Activated T-helper 2 cell treated with anti-CD3 and anti-CD28 coated beads, Interferon-gamma antibody, Interleukin-2, Interleukin-4, amounts not matched to agents 10 μg/mL and 5 μg/mL and 100 μg/mL, durations not matched to agents 14 hours and 24 hours and 36 hours (primary cell): ENCODE measurements at regions of chr6 and their contacts with region 1.

Region 1: DNA sequence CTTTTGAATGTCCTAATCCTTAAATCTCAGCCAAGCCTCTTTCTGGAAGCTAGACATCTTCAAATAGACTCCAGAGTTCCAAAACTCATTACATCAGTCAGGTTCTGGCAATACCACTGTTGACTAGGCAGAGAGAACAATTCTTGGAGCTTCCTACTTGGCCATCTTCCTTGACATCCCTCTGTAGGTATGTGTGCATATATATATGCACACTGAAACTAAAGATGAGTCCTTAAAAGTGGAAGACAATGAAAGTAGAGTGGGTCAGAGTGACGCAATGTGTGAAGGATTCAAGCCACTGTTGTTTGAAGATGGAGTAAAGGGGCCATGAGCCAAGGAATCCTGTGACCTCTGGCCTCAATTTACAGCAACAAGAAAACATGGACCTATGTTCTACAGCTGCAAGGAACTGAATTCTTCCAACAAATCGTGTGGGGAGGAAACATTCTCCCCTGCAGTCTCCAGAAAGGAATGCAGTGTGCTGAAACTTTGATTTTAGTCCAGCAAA is 18.7 kb upstream of the DUSP22 start:
- DNase-seq: no peak
- H3K4me3 Mint-ChIP-seq: no peak overlapping the region
- H3K27ac Mint-ChIP-seq: no peak overlapping the region
- H3K4me1 Mint-ChIP-seq: peaks cover 21% of the 10 kb centered on the region
- H3K27me3 Mint-ChIP-seq: peaks cover 7% of the 10 kb centered on the region

Region 2: DNA sequence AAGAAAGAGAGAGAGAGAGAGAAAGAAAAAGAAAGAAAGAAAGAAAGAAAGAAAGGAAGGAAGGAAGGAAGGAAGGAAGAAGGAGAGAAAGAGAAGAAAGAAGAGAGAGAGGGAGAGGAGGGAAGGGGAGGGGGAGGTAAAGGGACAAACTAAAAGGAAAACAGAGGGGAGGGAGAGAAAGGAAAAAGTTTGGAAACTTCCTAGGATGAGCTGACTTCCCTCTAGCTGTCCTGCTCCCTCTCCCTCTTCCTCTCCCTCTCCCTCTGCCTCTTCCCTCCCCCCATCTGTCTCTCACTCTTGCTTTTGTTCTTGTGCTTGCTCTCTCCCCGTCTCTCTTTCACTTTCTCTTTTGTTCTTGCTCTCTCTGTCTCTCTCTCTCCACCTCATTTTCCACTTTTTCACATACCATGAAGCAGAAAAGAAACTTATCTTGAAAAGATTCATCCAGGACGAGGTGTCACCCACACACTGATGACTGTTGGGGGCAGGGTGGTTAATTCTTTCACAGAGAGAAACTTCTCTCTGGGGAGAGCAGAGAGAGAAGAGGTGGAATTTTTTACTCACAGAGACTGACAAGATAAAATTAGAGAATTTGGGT is 37.7 kb before region 1 on chr6:
- intact Hi-C with region 1: loop called (anchors 1 kb)
- DNase-seq: peak; percentile 37
- H3K4me3 Mint-ChIP-seq: peak overlapping the region; percentile 60
- H3K27ac Mint-ChIP-seq: peak overlapping the region; percentile 82
- H3K4me1 Mint-ChIP-seq: peaks cover 43% of the 10 kb centered on the region
- H3K27me3 Mint-ChIP-seq: no peaks in the 10 kb centered on the region

Region 3: GRCh38 chr6:247351-247750 is 26.3 kb before region 1 on chr6:
- intact Hi-C with region 1: no loop called
- DNase-seq: no peak
- H3K4me3 Mint-ChIP-seq: no peak overlapping the region
- H3K27ac Mint-ChIP-seq: no peak overlapping the region
- H3K4me1 Mint-ChIP-seq: peaks cover 17% of the 10 kb centered on the region
- H3K27me3 Mint-ChIP-seq: peaks cover 6% of the 10 kb centered on the region

Region 4: GRCh38 chr6:259901-260508 is 13.6 kb before region 1 on chr6:
- intact Hi-C with region 1: loop called (anchors 1 kb)
- DNase-seq: no peak
- H3K4me3 Mint-ChIP-seq: peak overlapping the region; percentile 3
- H3K27ac Mint-ChIP-seq: peak overlapping the region; percentile 18
- H3K4me1 Mint-ChIP-seq: peaks cover 25% of the 10 kb centered on the region
- H3K27me3 Mint-ChIP-seq: peaks cover 6% of the 10 kb centered on the region

Region 5: GRCh38 chr6:285030-285809 is 11.6 kb after region 1 on chr6:
- intact Hi-C with region 1: loop called (anchors 1 kb)
- DNase-seq: no peak
- H3K4me3 Mint-ChIP-seq: no peak overlapping the region
- H3K27ac Mint-ChIP-seq: no peak overlapping the region
- H3K4me1 Mint-ChIP-seq: peaks cover 22% of the 10 kb centered on the region
- H3K27me3 Mint-ChIP-seq: peaks cover 2% of the 10 kb centered on the region

Region 6: DNA sequence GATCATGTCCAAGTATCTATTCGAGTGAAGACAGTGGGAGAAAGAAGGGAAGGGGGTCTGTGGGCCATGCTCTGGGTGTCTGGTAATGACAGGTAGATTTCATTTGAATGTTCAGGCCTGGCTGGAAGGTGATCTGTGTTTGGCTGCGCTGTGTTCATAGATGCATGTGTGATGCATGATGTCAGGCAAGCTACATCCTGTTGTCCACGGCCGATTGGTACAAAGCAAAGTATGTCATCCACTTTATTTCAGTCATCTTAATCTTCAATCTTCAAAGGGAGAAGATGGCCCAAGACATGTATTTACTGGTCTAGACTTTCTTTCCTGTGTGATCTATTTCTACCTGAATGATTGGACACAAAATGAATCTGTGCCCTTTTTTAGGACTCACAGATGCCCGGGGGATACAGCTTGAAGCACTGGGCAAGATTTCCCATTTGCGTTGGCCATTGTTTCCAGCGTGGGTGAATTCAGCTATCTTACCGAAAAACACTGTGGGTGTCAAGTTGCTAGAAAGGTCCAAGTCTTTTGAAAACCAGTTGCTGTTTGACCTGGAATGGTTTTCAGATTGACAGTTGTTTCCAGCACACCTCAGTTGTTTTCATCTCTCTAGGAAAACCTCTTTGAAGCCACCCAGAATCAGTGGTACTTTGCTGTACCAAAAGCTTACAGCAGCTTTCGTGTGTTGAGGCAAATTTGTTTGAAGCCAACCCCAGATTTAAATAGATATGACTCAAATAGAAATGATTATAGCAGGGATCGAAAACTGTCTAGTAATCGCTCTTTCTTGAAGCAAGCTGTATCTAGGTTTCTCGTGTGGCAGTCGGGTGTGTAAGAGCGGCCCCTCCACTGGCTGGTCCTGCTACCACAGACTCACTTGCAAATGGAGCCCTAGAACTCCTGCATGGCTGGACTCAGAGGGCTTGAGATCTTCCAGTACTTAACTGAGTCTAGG is 45.8 kb after region 1 on chr6:
- intact Hi-C with region 1: no loop called
- DNase-seq: no peak
- H3K4me3 Mint-ChIP-seq: no peak overlapping the region
- H3K27ac Mint-ChIP-seq: no peak overlapping the region
- H3K4me1 Mint-ChIP-seq: peaks cover 19% of the 10 kb centered on the region
- H3K27me3 Mint-ChIP-seq: no peaks in the 10 kb centered on the region